Head of caudate nucleus (tissue), 42 donors: ENCODE measurements at regions of chr4 and their contacts with region 1.

Region 1: DNA sequence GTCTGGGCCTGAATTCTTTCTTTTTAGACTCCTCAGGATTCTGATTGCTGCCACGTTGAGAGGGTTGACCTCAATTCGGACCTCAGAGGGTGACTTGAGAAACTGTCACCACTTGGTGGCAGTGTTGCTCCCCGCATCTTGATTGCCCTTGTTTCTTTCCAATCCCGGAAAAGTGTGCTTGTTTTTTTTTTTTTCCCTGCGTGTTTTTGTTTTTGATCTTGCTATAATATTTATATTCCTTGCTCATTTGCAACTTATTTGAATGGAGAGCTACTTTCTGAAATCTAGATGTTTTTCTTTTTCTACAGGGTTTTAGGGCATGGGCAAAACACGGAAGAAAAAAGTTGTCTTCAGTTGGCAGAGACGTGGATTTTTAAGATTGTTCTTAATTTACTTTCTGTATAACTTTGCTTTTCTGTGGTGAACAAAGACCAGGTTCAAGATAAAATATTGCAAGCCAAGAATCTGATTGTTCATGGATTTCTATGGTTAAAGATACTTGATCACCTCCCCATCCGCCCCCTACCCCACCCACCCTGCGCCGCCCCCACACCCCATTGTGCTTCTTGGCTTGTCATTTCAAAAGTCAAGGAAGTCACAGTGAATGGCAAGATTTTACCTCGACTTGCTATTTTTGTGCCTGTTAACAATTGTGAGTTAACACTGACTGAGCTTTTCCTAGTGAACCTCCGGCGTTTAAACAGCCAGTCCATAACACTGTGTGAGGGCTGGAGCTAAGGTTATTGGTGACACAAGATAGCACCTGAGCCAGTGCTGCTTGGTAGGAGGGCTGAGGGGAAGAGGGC is 102.1 kb downstream of the PTTG2 start:
- DNase-seq: peak; percentile 50 to 93 (median 82)

Region 2: DNA sequence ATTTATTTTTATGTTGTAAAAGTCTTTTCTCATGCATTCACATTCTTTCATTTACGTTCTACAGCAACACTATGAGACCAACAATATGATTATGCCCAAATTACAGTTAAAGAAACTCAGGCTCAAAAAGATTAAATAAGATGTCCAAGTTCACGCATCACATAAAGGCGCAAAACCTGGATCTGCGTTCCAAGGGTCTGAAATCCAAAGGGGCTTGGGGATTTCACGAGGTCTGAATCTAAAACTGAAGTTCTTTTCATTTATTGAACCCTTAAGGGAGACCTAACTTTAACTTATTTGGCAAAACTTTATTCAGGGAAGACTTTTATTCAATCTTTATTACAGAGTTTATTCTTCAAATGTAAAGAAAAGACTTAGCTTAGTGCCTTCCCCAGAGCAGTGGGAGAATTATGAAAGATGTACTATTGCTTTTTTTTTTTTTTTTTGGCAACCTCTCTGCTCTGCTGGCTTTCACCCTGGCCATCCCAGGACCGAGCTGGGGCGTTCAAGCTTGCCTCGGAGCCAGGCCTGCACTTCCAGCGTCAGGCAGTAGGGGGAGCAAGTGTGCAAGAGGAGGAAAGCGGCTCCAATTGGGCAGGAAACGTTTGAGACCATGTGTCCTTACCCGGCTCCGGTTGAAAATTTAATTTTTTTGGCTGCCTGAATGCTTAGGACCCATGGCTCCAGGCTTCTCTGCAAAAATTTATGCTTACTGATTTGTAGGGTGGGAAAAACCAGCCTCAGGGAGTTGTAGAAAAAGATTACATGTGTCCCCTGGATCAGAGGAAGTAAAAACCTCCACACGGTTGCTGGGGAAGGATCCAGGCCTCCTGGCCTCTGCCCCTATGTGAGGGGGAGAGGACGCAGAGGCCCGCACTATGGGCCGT is 257.4 kb after region 1 on chr4:
- intact Hi-C with region 1: loop called (anchors 10 kb)
- DNase-seq: peak; percentile 68 to 98 (median 93)

Region 3: GRCh38 chr4:38675146-38676121 is 613.1 kb after region 1 on chr4:
- intact Hi-C with region 1: loop called (anchors 10 kb)
- DNase-seq: peak; percentile 37 to 96 (median 85)

Region 4: GRCh38 chr4:38782452-38783108 is 720.3 kb after region 1 on chr4 and contains the start of gene TLR10:
- intact Hi-C with region 1: loop called (anchors 10 kb)
- DNase-seq: peak in 28 of 42 donors; percentile 26 to 80 (median 52)